HepG2 (cell line): ENCODE measurements at regions of chr13 and their contacts with region 1.

Region 1: DNA sequence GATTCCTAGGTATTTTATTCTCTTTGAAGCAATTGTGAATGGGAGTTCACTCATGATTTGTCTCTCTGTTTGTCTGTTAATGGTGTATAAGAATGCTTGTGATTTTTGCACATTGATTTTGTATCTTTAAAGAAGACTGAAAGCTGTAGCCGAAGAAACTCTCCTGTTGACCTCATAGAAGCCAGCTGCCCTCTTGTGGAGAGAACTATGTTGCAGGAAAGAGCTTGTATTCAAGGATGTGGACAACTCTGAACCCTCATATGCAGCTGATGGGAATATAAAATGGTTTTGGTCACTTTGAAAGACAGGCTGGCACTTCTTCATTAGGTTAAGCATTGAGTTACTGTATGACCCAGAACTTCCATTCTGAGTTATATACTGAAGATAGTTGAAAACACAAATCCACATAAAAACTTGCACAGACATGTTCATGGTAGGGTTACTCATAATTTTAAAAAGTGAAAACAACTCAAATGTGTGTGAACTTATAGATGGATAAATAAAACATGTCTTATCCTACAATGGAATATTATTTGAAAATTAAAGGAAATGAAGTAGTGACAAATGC is 65.8 kb upstream of the SLITRK6 start:
- DNase-seq: peak; percentile 6
- ATAC-seq: peak; percentile 84
- H3K4me3 ChIP-seq: no peak overlapping the region
- H3K27ac ChIP-seq: no peak overlapping the region
- H3K4me1 ChIP-seq: no peaks in the 10 kb centered on the region
- H3K27me3 ChIP-seq: no peaks in the 10 kb centered on the region
- CTCF ChIP-seq: peak; percentile 19; the same call in 1 of the 2 replicates
- EP300 ChIP-seq: no peak
- POLR2A ChIP-seq: no peak
- RAD21 ChIP-seq: no peak

Region 2: DNA sequence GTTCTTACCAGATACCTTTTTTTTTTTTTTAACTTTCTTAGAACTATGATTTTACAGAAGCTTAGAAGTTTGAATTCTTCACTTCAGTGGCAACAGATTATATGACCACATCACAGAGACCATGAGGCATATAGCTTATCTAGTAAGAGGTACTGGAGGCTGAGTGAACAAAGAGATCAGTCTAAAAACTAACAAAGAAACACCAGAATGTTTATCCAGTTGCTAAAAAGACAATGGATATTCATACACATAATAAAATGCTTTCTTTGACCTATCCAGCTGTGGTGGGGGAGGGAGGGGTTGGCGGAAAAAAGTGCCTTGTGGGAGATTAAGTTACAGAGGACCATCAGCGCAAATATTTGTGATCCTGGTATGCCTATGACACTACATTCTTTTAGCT is 31.1 kb before region 1 on chr13:
- CTCF ChIA-PET with region 1: no interaction called
- POLR2A ChIA-PET with region 1: no interaction called
- in situ Hi-C with region 1: no loop called
- intact Hi-C with region 1: loop called (anchors 1 kb)
- DNase-seq: no peak
- ATAC-seq: no peak
- H3K4me3 ChIP-seq: no peak overlapping the region
- H3K27ac ChIP-seq: no peak overlapping the region
- H3K4me1 ChIP-seq: no peaks in the 10 kb centered on the region
- H3K27me3 ChIP-seq: no peaks in the 10 kb centered on the region
- CTCF ChIP-seq: no peak
- EP300 ChIP-seq: no peak
- POLR2A ChIP-seq: no peak
- RAD21 ChIP-seq: no peak

Region 3: DNA sequence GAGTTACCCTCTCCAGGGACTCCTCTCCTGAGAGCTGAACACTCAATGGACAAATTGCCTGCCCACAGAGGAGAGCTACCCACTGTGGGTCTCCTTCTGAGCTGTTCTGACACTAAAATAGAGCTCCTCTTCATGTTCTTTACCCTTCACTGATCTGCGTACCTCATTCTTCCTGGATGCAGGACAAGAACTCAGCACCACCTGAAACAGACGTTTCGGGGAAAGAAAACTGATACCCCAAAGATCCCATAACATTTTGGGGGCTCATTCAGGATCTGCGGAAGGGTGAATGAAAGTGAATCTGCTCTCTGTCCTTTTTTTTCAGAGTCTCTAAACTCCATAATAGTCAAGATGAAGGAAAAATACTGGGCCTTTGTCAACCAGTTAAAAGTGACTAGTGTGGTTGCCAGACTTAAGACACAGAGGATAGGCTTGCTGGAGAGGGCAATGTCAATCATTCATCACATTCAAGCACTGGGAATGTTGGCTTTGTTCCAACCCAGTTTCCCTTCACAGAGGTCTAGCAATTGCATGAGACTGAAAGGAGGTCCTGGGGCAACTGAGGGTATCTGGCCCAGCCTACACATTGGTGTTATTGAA is 70.9 kb after region 1 on chr13:
- CTCF ChIA-PET with region 1: no interaction called
- POLR2A ChIA-PET with region 1: no interaction called
- in situ Hi-C with region 1: no loop called
- intact Hi-C with region 1: no loop called
- DNase-seq: no peak
- ATAC-seq: no peak
- H3K4me3 ChIP-seq: no peak overlapping the region
- H3K27ac ChIP-seq: no peak overlapping the region
- H3K4me1 ChIP-seq: no peaks in the 10 kb centered on the region
- H3K27me3 ChIP-seq: no peaks in the 10 kb centered on the region
- CTCF ChIP-seq: no peak
- EP300 ChIP-seq: no peak
- POLR2A ChIP-seq: no peak
- RAD21 ChIP-seq: no peak